A673 (cell line): ENCODE measurements at regions of chr6 and their contacts with region 1.

Region 1: DNA sequence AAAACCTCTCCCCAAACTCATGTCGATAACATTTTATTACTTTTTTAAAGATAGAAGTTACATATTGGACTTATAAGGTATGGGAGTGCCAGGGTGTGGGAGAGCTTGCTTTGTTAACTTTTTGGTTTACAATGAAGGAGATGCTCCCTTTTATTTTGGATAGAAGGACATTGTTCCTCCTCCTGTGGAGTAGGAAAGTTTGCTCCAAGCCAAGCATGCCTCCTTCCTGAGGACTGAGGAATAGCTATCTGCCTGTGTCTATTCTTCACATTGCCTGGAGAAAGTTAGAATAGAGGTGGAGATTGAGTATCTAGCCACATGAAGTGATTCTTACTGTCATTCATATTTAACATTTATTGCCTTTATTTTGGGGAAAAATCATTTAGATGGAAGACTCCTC is 71.9 kb downstream of the EYA4 start:
- DNase-seq: peak; percentile 5
- H3K4me3 ChIP-seq: no peak overlapping the region
- H3K27ac ChIP-seq: no peak overlapping the region
- H3K4me1 ChIP-seq: no peaks in the 10 kb centered on the region
- H3K27me3 ChIP-seq: no peaks in the 10 kb centered on the region
- CTCF ChIP-seq: no peak

Region 2: GRCh38 chr6:132227904-132228303 is 1085.2 kb before region 1 on chr6:
- CTCF ChIA-PET with region 1: no interaction called
- POLR2A ChIA-PET with region 1: no interaction called
- intact Hi-C with region 1: no loop called
- DNase-seq: no peak
- H3K4me3 ChIP-seq: no peak overlapping the region
- H3K27ac ChIP-seq: no peak overlapping the region
- H3K4me1 ChIP-seq: no peaks in the 10 kb centered on the region
- H3K27me3 ChIP-seq: no peaks in the 10 kb centered on the region
- CTCF ChIP-seq: no peak

Region 3: DNA sequence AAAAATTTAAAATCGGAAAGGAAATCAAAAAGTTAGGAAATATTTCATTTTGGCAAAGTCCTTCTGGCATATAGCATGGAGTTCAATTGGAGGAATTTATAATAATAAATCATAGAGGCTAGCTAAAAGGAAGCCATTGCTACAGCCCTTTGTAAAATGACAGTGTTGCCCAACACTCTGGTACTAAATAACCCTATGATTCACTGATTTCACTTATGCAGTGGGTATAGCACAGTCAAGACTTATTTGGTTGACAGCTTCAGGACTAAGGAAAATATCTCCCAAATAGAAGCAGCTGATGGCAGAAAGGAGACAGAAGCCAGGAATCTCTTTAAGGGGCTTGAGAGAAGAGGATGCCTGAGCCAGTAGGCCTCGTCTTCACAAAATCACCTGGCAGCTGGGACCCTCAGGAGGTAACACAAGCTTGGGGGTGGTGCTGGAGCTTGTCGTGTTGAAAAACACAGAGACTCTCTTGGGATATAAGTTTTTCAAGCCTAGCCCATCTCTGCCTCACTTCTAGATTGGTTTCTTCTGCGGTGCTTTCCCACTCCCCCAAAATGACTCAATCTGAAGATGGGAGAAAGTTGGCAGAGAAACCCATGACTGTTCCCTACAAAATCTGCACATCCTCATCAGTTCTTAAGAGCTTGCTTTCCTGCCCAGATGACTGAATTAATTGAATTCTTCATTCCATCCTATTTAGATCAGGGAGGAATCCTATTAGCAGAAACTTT is 110.3 kb before region 1 on chr6:
- CTCF ChIA-PET with region 1: no interaction called
- POLR2A ChIA-PET with region 1: interaction called, 18 read pairs
- intact Hi-C with region 1: no loop called
- DNase-seq: no peak
- H3K4me3 ChIP-seq: no peak overlapping the region
- H3K27ac ChIP-seq: no peak overlapping the region
- H3K4me1 ChIP-seq: no peaks in the 10 kb centered on the region
- H3K27me3 ChIP-seq: peaks cover 4% of the 10 kb centered on the region
- CTCF ChIP-seq: no peak